MCF 10A (cell line): ENCODE measurements at regions of chr1 and their contacts with region 1.

Region 1: GRCh38 chr1:92461364-92462097 is 25.2 kb downstream of the GFI1 start:
- DNase-seq: peak; percentile 30
- H3K4me3 Mint-ChIP-seq: no peak overlapping the region
- H3K27ac Mint-ChIP-seq: no peak overlapping the region
- H3K4me1 Mint-ChIP-seq: no peaks in the 10 kb centered on the region
- H3K27me3 Mint-ChIP-seq: no peaks in the 10 kb centered on the region
- CTCF ChIP-seq: no peak

Region 2: DNA sequence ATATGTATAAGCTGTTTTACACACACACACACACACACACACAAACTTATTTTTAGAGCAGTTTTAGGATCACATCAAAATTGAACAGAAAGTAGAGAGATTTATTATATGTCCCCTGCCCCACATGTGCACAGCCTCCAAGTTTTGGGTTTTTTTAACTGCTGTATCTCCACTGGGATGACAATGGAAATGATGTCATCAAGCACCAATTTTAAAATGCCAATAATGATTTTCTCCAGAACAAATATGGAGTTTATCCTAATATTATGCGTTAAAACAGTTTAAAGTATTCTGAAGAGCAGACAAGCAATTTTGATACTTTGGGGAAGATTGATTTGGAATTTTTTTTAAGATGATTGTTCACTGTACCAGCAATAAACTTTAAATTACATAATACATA is 31.5 kb before region 1 on chr1:
- CTCF ChIA-PET with region 1: no interaction called
- POLR2A ChIA-PET with region 1: no interaction called
- intact Hi-C with region 1: no loop called
- DNase-seq: no peak
- H3K4me3 Mint-ChIP-seq: no peak overlapping the region
- H3K27ac Mint-ChIP-seq: no peak overlapping the region
- H3K4me1 Mint-ChIP-seq: no peaks in the 10 kb centered on the region
- H3K27me3 Mint-ChIP-seq: no peaks in the 10 kb centered on the region
- CTCF ChIP-seq: no peak

Region 3: GRCh38 chr1:92599184-92599583 is 137.7 kb after region 1 on chr1:
- CTCF ChIA-PET with region 1: interaction called, 3 read pairs
- POLR2A ChIA-PET with region 1: no interaction called
- intact Hi-C with region 1: loop called (anchors 5 kb)
- DNase-seq: peak; percentile 43
- H3K4me3 Mint-ChIP-seq: no peak overlapping the region
- H3K27ac Mint-ChIP-seq: no peak overlapping the region
- H3K4me1 Mint-ChIP-seq: no peaks in the 10 kb centered on the region
- H3K27me3 Mint-ChIP-seq: no peaks in the 10 kb centered on the region
- CTCF ChIP-seq: peak; percentile 48